ENCODE measurements at regions of chr4 and their contacts with region 1.

Region 1: DNA sequence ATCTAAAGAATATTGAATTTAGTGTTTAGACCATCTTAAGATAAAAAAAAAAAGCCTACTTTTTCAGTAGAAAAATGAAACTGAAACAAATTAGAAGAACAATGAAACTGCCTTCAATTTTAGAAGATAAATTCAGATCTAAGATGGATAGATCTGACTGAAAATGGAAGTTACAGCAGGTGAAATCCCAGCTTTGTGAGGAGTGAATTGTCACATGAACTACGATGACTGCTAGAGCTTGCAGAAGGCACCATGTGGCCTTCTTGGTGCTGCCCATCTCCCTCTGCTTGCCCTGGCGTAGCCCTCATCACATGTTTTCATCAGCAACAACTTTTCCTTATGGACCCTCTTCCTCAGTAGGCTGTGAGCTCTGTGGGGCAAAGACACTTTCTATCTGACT is 51.4 kb upstream of the EMCN start:
- DNase-seq: peak; percentile 14
- ATAC-seq: peak; percentile 91
- H3K4me3 Mint-ChIP-seq: no peak overlapping the region
- H3K27ac Mint-ChIP-seq: peak overlapping the region; percentile 63
- H3K4me1 Mint-ChIP-seq: peaks cover 21% of the 10 kb centered on the region
- H3K27me3 Mint-ChIP-seq: no peaks in the 10 kb centered on the region

Region 2: GRCh38 chr4:100082852-100083251 is 486.3 kb before region 1 on chr4:
- CTCF ChIA-PET with region 1: no interaction called
- POLR2A ChIA-PET with region 1: no interaction called
- intact Hi-C with region 1: loop called in 1 of 2 experiments (anchors 5 kb)
- DNase-seq: no peak
- ATAC-seq: peak; percentile 73
- H3K4me3 Mint-ChIP-seq: no peak overlapping the region
- H3K27ac Mint-ChIP-seq: peak overlapping the region; percentile 81
- H3K4me1 Mint-ChIP-seq: peaks cover 52% of the 10 kb centered on the region
- H3K27me3 Mint-ChIP-seq: peaks cover 3% of the 10 kb centered on the region